Activated naive CD4-positive, alpha-beta T cell treated with anti-CD3 and anti-CD28 coated beads for 36 hours (primary cell): ENCODE measurements at regions of chr3 and their contacts with region 1.

Region 1: DNA sequence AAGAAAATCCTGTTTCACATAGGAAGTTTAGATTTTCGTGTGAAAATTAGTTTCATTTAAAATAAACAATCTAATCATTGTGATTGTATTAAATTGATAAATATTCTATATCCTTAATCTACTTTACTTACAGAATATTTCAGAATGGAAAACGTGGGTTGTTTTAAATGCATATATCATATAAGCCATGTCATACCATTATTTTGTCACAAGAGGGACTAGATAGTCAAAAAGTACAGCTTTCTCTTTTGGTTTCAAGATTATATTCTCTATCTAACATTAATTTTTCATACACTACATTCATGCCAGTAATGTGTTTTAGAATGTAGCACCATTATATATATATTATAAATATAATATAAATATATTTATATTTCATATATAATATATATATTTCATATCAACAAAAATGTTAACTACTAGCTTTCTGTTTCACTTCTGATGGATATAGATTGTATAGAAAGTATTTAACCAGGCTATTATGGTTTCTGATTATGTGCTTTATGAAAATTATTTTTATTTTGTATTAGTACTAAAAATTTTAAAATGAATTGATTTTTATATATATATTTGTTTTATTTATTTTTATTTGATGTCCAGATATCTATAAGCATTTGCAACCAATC is 45.3 kb downstream of the OSTN start:
- DNase-seq: no peak
- H3K4me3 Mint-ChIP-seq: no peak overlapping the region
- H3K27ac Mint-ChIP-seq: no peak overlapping the region
- H3K4me1 Mint-ChIP-seq: peaks cover 2% of the 10 kb centered on the region
- H3K27me3 Mint-ChIP-seq: no peaks in the 10 kb centered on the region

Region 2: GRCh38 chr3:191388823-191389222 is 144.5 kb after region 1 on chr3:
- CTCF ChIA-PET with region 1: no interaction called
- intact Hi-C with region 1: loop called (anchors 10 kb)
- DNase-seq: no peak
- H3K4me3 Mint-ChIP-seq: no peak overlapping the region
- H3K27ac Mint-ChIP-seq: no peak overlapping the region
- H3K4me1 Mint-ChIP-seq: no peaks in the 10 kb centered on the region
- H3K27me3 Mint-ChIP-seq: no peaks in the 10 kb centered on the region